IMR-90 (cell line): ENCODE measurements at regions of chr4 and their contacts with region 1.

Region 1: DNA sequence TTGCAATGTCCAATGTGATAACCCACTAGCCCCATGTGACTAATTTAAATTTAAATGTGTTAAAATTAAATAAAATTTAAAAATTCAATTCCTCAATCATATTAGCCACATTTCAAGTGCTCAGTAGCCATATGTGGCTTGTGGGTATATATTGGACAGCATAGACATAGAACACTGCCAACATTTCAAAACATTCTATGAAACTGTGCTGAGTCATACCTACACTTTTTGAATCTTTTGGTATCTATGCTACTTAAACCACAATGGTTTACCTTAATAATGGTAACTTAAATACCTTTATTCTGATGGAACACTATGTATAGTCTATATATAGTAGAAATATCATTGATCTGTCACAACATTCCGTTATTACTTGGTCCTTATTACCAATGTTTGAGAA is 223.4 kb upstream of the ATOH1 start:
- DNase-seq: no peak
- ATAC-seq: no peak
- H3K4me3 ChIP-seq: no peak overlapping the region
- H3K27ac ChIP-seq: no peak overlapping the region
- H3K4me1 ChIP-seq: no peaks in the 10 kb centered on the region
- H3K27me3 ChIP-seq: no peaks in the 10 kb centered on the region
- CTCF ChIP-seq: no peak
- POLR2A ChIP-seq: no peak
- RAD21 ChIP-seq: no peak

Region 2: DNA sequence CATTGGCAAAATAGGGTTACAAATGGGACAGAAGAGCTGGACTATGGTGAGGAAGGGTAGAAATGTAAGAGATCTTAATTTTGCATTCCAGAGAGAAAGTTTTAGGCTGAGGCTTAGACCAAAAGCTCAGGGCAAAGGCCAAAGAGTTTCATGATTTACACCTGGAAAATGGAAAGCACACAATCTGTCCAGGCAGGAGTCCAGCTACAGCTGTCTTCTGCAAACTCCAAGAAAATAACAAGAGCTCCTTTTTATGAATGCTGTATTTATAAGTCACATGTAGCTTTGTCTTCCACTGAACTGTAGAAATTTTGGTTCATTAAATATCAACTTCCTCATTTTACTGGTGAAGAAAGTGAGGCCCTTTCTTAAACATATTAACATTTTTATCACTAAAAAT is 64.6 kb before region 1 on chr4:
- CTCF ChIA-PET with region 1: no interaction called
- POLR2A ChIA-PET with region 1: no interaction called
- dilution Hi-C with region 1: no loop called
- in situ Hi-C with region 1: no loop called
- intact Hi-C with region 1: loop called (anchors 10 kb)
- DNase-seq: no peak
- ATAC-seq: no peak
- H3K4me3 ChIP-seq: no peak overlapping the region
- H3K27ac ChIP-seq: no peak overlapping the region
- H3K4me1 ChIP-seq: no peaks in the 10 kb centered on the region
- H3K27me3 ChIP-seq: no peaks in the 10 kb centered on the region
- CTCF ChIP-seq: no peak
- POLR2A ChIP-seq: no peak
- RAD21 ChIP-seq: no peak